Head of caudate nucleus (tissue), 42 donors: ENCODE measurements at regions of chr13 and their contacts with region 1.

Region 1: GRCh38 chr13:46721054-46721453 is 75.9 kb downstream of the ESD start:
- DNase-seq: peak in 36 of 42 donors; percentile 14 to 73 (median 51)

Region 2: GRCh38 chr13:46492946-46493345 is 228.1 kb before region 1 on chr13:
- intact Hi-C with region 1: loop called (anchors 5 kb)
- DNase-seq: peak in 14 of 42 donors; percentile 5 to 65 (median 21)

Region 3: GRCh38 chr13:47299304-47299703 is 578.2 kb after region 1 on chr13:
- intact Hi-C with region 1: no loop called
- DNase-seq: no peak